ENCODE measurements at regions of chr3 and their contacts with region 1.

Region 1: DNA sequence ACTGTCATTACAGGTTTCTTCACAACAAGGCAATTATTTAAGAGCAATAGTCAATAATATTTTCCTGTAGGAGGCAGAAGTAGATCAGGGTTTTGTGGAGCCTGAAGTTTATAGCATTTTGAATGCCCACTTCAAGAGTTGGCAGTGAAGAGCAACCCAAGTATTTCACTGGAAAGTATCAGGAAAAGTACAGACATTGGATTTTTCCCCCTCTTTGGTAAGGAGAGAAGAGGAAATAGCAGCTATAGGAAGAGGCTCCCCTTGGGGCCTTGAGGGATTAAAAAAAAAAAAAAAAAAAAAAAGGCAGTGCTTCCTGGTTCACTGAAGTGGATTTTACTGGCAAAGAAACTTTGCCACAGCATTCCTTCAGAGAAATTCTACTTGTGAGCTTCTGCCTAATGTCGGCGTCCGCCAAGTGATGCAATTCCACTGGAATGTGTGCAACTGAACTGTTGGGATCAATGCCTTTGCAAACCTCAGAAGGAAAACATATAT is 5.7 kb upstream of the CNTN6 start:
- DNase-seq: peak; percentile 36
- H3K4me3 Mint-ChIP-seq: peak overlapping the region; percentile 17
- H3K27ac Mint-ChIP-seq: no peak overlapping the region
- H3K4me1 Mint-ChIP-seq: no peaks in the 10 kb centered on the region
- H3K27me3 Mint-ChIP-seq: no peaks in the 10 kb centered on the region
- CTCF ChIP-seq: peak; percentile 25

Region 2: DNA sequence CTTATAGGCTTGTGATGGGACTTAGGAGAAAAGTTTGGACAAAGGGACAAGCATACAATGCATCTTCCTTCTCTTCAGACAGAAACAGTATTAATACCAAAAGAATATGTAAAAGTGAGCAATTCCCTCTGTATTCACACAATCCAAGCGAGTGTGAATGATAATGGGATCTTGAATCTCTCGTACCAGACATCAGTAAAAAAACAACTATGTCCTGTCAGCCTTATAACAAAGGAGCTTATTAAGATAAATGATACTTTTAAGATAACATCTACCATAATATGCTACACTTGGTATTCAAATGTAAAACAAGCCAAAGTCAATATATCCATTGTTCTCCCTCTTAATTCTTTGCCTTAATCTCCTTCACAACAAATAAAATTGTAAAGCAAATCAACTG is 282.9 kb before region 1 on chr3:
- CTCF ChIA-PET with region 1: no interaction called
- POLR2A ChIA-PET with region 1: no interaction called
- intact Hi-C with region 1: no loop called
- DNase-seq: no peak
- H3K4me3 Mint-ChIP-seq: no peak overlapping the region
- H3K27ac Mint-ChIP-seq: no peak overlapping the region
- H3K4me1 Mint-ChIP-seq: no peaks in the 10 kb centered on the region
- H3K27me3 Mint-ChIP-seq: no peaks in the 10 kb centered on the region
- CTCF ChIP-seq: no peak

Region 3: DNA sequence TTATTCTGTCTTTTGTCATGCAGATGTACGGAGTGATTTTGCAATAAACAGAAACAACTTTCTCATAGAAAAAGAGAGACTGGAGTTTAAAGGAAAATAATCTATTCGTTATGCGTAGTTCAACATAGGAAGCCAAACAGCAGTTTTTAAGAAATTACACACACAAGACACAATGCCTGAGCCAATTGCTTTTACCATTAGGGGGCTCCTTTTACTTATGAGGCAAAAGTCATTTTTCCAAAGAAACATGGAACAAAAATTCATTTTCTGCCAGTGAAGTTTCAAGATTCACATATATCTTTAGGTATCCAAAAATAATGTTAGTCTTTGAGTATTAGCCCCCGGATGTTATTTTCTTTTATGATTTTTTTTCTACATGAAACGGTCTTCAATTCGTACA is 16.4 kb after region 1 on chr3:
- CTCF ChIA-PET with region 1: no interaction called
- POLR2A ChIA-PET with region 1: no interaction called
- intact Hi-C with region 1: no loop called
- DNase-seq: no peak
- H3K4me3 Mint-ChIP-seq: no peak overlapping the region
- H3K27ac Mint-ChIP-seq: no peak overlapping the region
- H3K4me1 Mint-ChIP-seq: no peaks in the 10 kb centered on the region
- H3K27me3 Mint-ChIP-seq: no peaks in the 10 kb centered on the region
- CTCF ChIP-seq: no peak

Region 4: DNA sequence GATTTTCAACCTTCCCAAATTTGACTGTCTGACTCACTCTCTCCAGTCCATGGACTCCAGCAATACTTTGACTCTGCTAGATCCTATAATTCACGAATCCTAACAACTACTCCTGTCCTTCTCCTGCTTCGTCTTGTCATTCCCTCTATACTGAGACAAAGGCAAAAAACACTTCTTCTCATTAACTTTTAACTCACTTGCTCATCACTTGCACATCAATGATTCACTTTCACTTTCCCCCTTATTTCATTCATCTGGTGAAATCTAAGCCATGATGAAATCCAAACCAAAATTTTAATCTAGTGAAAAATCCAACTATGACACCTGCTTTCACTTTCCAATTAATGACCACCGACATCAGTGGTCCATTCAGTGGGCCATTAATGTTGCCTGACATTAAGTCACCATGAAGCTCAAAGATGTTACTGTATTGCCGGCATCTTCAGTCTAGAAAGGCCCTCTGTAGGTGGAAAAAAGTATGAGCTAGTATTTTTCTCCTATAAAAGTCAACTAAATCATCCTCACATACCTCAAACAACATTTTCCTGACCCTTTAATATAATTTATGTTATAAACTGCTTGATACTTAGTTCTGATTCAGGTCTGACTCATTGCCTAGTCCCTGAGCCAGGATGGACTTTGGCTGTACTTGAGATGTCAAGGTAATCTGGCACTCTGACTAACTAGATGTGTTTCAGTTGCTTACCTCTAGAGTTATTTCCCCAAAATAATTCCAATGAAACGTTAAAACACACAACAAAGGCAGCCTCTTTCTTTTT is 164.4 kb after region 1 on chr3:
- CTCF ChIA-PET with region 1: no interaction called
- POLR2A ChIA-PET with region 1: no interaction called
- intact Hi-C with region 1: loop called (anchors 5 kb)
- DNase-seq: peak; percentile 24
- H3K4me3 Mint-ChIP-seq: no peak overlapping the region
- H3K27ac Mint-ChIP-seq: peak overlapping the region; percentile 44
- H3K4me1 Mint-ChIP-seq: peaks cover 11% of the 10 kb centered on the region
- H3K27me3 Mint-ChIP-seq: no peaks in the 10 kb centered on the region
- CTCF ChIP-seq: peak; percentile 15

Region 5: DNA sequence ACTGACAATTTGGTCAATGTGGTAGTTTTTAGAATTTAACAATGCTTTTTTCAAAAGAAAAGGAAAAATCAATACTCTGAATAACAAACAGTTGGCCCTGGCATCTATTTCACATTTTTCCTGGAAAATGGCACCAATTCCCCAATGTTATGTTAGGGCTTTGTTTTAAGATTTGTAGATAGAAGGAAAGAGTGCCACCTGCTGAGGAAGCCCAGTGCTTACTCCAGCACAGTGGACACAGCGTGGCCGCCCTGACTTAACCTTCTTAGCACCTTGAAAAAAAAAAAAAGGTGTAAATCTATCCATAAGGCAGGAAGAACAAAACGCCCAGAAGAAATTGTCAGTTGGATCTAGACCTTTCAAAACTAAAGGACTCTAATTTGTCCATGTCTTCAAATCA is 900.9 kb after region 1 on chr3:
- CTCF ChIA-PET with region 1: interaction called, 15 read pairs
- POLR2A ChIA-PET with region 1: no interaction called
- intact Hi-C with region 1: loop called (anchors 1 kb)
- DNase-seq: peak; percentile 22
- H3K4me3 Mint-ChIP-seq: no peak overlapping the region
- H3K27ac Mint-ChIP-seq: no peak overlapping the region
- H3K4me1 Mint-ChIP-seq: no peaks in the 10 kb centered on the region
- H3K27me3 Mint-ChIP-seq: no peaks in the 10 kb centered on the region
- CTCF ChIP-seq: peak; percentile 36

Region 6: DNA sequence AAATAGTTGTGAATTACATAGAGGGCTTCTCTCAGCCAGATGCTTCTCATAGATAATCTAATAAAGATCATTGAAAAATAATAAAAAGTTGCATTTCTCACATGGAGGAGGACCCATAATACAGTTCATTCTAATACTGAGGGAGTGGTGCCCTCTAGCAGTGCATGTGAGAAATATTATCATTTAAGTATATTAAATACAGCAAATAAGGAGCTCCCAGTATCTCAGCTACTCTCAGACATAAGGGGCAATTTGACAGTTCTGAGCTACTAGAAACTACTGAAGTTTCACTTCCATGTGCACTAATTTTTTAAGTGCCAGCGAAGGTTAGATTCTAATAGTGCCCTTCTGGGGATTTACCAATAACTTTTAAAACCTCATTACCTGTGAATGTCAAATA is 1834.8 kb after region 1 on chr3:
- CTCF ChIA-PET with region 1: interaction called, 3 read pairs
- POLR2A ChIA-PET with region 1: no interaction called
- intact Hi-C with region 1: loop called (anchors 5 kb)
- DNase-seq: peak; percentile 41
- H3K4me3 Mint-ChIP-seq: no peak overlapping the region
- H3K27ac Mint-ChIP-seq: no peak overlapping the region
- H3K4me1 Mint-ChIP-seq: no peaks in the 10 kb centered on the region
- H3K27me3 Mint-ChIP-seq: peaks cover 67% of the 10 kb centered on the region
- CTCF ChIP-seq: peak; percentile 43

Region 7: GRCh38 chr3:3015185-3016089 is 1928.3 kb after region 1 on chr3:
- CTCF ChIA-PET with region 1: no interaction called
- POLR2A ChIA-PET with region 1: no interaction called
- intact Hi-C with region 1: loop called (anchors 2 kb)
- DNase-seq: peak; percentile 53
- H3K4me3 Mint-ChIP-seq: no peak overlapping the region
- H3K27ac Mint-ChIP-seq: no peak overlapping the region
- H3K4me1 Mint-ChIP-seq: no peaks in the 10 kb centered on the region
- H3K27me3 Mint-ChIP-seq: peaks cover 100% of the 10 kb centered on the region
- CTCF ChIP-seq: peak; percentile 50

Measured in MCF 10A (cell line).